Uterus (tissue), 4 donors: ENCODE measurements at regions of chr17 and their contacts with region 1.

Region 1: DNA sequence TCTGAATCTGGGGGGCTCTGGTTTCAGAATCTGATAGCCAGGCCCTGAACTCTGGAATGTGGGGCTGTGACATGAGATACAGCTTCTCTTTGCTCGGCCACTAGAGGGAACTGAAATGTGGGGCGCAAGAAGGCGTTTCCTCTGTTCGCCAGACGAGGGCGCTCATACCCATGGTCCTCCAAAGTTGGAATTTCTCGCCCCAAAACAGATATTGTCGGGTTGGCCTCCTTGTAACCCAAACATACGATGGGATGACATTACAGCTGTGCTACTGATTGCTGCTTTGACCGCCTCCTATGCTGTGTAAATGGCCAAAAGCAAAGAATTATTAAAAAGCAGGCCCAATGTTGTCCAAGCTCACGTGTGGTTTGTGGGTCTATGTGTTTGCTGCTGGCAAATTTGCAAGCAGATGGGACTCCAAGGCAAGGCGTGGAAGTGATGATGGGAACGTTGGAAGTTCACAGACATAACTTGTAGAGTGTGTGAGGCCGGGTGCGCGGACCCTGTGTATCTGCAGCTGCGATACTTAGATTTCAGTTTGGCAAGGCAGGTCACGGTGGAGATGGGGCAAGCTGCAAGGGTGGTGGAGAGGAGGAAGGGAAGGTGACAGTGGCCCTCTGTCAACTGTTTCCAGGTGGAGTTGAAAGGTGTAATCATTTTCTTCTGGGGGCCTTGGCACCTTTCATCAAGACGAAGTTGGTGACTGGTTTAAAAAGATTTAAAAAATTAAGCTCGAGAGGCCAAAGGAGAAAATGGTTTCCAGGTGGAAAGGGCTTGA is 13.0 kb upstream of the MSI2 start:
- DNase-seq: peak; percentile 56 to 58
- H3K4me3 ChIP-seq: no peak overlapping the region
- H3K27ac ChIP-seq: no peak overlapping the region
- H3K4me1 ChIP-seq: no peaks in the 10 kb centered on the region
- H3K27me3 ChIP-seq: no peaks in the 10 kb centered on the region
- CTCF ChIP-seq: peak; percentile 90 to 97 (median 94)
- POLR2A ChIP-seq: no peak

Region 2: GRCh38 chr17:57671667-57672632 is 428.6 kb after region 1 on chr17:
- intact Hi-C with region 1: loop called (anchors 5 kb)
- DNase-seq: peak; percentile 64 to 65
- H3K4me3 ChIP-seq: no peak overlapping the region
- H3K27ac ChIP-seq: no peak overlapping the region
- H3K4me1 ChIP-seq: no peaks in the 10 kb centered on the region
- H3K27me3 ChIP-seq: no peaks in the 10 kb centered on the region
- CTCF ChIP-seq: peak; percentile 79 to 92 (median 84)
- POLR2A ChIP-seq: no peak

Region 3: DNA sequence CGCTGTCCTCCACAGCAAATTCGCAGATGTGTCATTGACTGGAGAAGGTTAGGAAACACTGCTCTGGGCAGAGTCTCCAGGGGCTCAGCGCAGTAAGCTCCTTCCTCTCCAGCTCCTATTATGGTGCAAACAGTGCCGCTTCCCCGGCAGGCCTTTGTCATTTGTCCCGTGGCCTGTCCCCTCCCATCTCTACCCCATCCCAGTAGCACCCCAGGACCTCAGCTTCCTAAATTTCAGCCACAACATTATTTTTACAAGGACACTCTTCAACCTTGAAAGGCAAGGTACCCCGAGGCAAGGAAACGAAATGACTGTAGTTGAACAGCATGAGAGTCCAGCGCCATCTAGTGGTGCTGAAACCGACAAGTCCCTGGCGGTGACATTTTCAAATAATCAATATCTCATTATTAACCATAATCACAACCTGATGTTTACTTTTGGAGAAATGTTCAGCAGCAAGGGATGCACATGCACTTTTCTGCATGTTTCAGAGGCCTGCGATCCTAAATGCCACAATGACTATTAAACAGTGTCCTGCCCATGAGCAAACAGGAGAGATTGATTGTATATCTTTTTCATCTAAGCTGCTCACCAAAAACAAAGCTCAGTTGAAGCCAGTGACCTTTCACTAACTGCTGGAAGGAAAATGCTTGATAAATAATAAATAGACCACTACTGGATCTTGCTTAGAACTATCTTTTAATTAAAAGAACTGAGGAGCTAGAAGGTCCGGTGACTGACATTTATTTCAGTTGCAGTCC is 590.0 kb after region 1 on chr17:
- intact Hi-C with region 1: loop called (anchors 10 kb)
- DNase-seq: peak; percentile 58 to 60
- H3K4me3 ChIP-seq: peak overlapping the region; percentile 22 to 42
- H3K27ac ChIP-seq: peak overlapping the region; percentile 40 to 47
- H3K4me1 ChIP-seq: no peaks in the 10 kb centered on the region
- H3K27me3 ChIP-seq: no peaks in the 10 kb centered on the region
- CTCF ChIP-seq: peak; percentile 76 to 89 (median 83)
- POLR2A ChIP-seq: no peak